A549 (cell line): ENCODE measurements at regions of chr17 and their contacts with region 1.

Region 1: GRCh38 chr17:35808962-35809854 is at the start of gene TAF15:
- DNase-seq: peak; percentile 95 to 99
- ATAC-seq: peak; percentile 91 to 96
- H3K4me3 ChIP-seq: peak within 1 kb of the TSS; percentile 58
- H3K27ac ChIP-seq: peak within 1 kb of the TSS; percentile 86 to 97
- H3K4me1 ChIP-seq: peaks cover 34% of the 10 kb centered on the region
- CTCF ChIP-seq: peak; percentile 82
- EP300 ChIP-seq: no peak
- POLR2A ChIP-seq: peak; percentile 98
- RAD21 ChIP-seq: peak; percentile 47 to 61; a peak in 3 of 5 replicates
- polyA plus RNA-seq, gene TAF15: 130 and 213 TPM in 2 replicates

Region 2: DNA sequence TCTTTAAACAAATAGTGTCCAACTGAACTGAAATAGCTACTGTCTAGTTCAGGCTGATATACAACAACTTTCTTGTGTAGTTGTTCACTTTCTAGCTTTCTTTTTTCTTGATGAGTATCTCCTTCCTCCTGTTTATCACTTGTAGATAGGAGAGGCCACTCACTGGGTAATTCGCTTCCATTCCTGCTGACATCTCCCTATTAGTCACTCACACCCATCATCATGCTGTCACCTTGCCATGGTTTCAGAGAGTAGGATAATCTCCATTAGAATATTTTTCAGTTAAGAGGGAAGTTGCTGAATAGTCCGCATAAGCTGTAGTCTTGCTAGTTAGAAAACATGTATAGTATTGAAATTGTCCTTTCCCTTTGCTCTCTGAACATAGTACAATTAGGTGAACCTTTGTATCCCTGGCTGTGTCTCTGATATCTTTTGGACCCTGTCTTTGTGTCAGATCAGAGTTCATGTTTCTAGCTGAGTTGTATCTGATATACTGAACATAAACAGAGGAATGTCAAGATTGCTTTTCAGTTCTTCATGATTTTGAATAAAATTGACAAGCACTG is 142.2 kb before region 1 on chr17:
- CTCF ChIA-PET with region 1: no interaction called
- POLR2A ChIA-PET with region 1: no interaction called
- DNase-seq: no peak
- ATAC-seq: no peak
- H3K4me3 ChIP-seq: no peak overlapping the region
- H3K27ac ChIP-seq: no peak overlapping the region
- H3K4me1 ChIP-seq: no peaks in the 10 kb centered on the region
- CTCF ChIP-seq: no peak
- EP300 ChIP-seq: no peak
- POLR2A ChIP-seq: no peak
- RAD21 ChIP-seq: no peak

Region 3: GRCh38 chr17:35740997-35741931 is 67.9 kb before region 1 on chr17:
- CTCF ChIA-PET with region 1: interaction called, 10 read pairs
- POLR2A ChIA-PET with region 1: no interaction called
- DNase-seq: no peak
- ATAC-seq: peak; percentile 54 to 67
- H3K4me3 ChIP-seq: peak overlapping the region; percentile 39
- H3K27ac ChIP-seq: no peak overlapping the region
- H3K4me1 ChIP-seq: peaks cover 6% of the 10 kb centered on the region; the same call in 1 of the 3 replicates
- CTCF ChIP-seq: no peak
- EP300 ChIP-seq: no peak
- POLR2A ChIP-seq: no peak
- RAD21 ChIP-seq: no peak

Region 4: GRCh38 chr17:35788504-35789368 is 20.5 kb before region 1 on chr17:
- CTCF ChIA-PET with region 1: interaction called, 2,039 read pairs
- POLR2A ChIA-PET with region 1: interaction called, 27 read pairs
- DNase-seq: peak; percentile 85 to 91
- ATAC-seq: peak; percentile 90
- H3K4me3 ChIP-seq: no peak overlapping the region
- H3K27ac ChIP-seq: peak overlapping the region; percentile 83 to 93
- H3K4me1 ChIP-seq: peaks cover 67% of the 10 kb centered on the region
- CTCF ChIP-seq: no peak
- EP300 ChIP-seq: no peak
- POLR2A ChIP-seq: no peak
- RAD21 ChIP-seq: no peak

Region 5: GRCh38 chr17:35794988-35795824 is 14.0 kb before region 1 on chr17 and contains the start of gene MMP28:
- CTCF ChIA-PET with region 1: interaction called, 2,039 read pairs
- POLR2A ChIA-PET with region 1: interaction called, 20 read pairs
- DNase-seq: peak; percentile 52 to 70
- ATAC-seq: peak; percentile 83 to 86
- H3K4me3 ChIP-seq: peak within 1 kb of the TSS; percentile 56
- H3K27ac ChIP-seq: peak within 1 kb of the TSS; percentile 74 to 90
- H3K4me1 ChIP-seq: peaks cover 19% of the 10 kb centered on the region
- CTCF ChIP-seq: no peak
- EP300 ChIP-seq: no peak
- POLR2A ChIP-seq: peak; percentile 43
- RAD21 ChIP-seq: no peak
- polyA plus RNA-seq, gene MMP28: 6.7 and 7.1 TPM in 2 replicates

Region 6: DNA sequence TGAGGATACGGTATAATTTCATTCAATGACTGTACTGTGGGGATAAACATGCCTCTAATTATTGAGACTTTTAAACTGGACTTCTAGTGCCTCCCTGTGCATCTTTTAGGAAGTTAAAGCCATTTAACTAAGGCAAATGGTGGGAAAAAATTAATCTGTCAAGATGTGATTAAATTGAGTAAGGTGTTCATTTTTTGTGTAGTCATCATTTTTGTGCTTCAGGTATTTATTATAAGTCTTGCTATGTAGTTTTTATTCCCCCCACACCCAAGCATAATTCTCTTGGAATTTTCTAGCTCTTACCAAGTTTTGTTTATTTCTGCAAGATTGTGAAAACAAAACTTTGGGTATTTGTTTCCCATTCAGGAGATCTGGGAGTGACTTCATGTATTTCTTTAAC is 10.2 kb after region 1 on chr17:
- CTCF ChIA-PET with region 1: interaction called, 36 read pairs
- POLR2A ChIA-PET with region 1: interaction called, 49 read pairs
- DNase-seq: no peak
- ATAC-seq: no peak
- H3K4me3 ChIP-seq: no peak overlapping the region
- H3K27ac ChIP-seq: no peak overlapping the region
- H3K4me1 ChIP-seq: peaks cover 25% of the 10 kb centered on the region
- CTCF ChIP-seq: no peak
- EP300 ChIP-seq: no peak
- POLR2A ChIP-seq: no peak
- RAD21 ChIP-seq: no peak

Region 7: DNA sequence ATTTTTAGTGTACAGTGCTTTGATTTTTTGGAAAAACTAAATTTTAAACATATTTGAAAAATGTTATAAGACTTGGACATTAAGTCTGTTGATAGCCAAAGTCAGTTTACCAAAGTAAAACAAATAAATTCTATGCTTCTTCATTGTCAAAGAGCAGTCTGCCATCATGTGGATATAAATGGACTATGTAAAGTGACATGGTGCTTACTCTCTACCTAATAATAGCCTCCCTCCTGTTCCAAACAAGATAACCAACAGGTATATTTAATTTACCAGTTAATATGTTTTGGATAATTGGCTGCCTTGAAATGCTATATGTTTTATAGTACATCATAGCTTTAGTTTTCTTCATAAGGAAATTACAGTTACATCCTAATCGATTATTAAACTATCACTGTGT is 16.0 kb after region 1 on chr17:
- CTCF ChIA-PET with region 1: interaction called, 36 read pairs
- POLR2A ChIA-PET with region 1: interaction called, 49 read pairs
- DNase-seq: no peak
- ATAC-seq: no peak
- H3K4me3 ChIP-seq: no peak overlapping the region
- H3K27ac ChIP-seq: no peak overlapping the region
- H3K4me1 ChIP-seq: 0 out of 3 replicates have a peak, but pooled peaks cover 3% of the 10 kb centered on the region
- CTCF ChIP-seq: no peak
- EP300 ChIP-seq: no peak
- POLR2A ChIP-seq: no peak
- RAD21 ChIP-seq: no peak